ENCODE measurements at regions of chr5 and their contacts with region 1.

Region 1: GRCh38 chr5:892394-893136 is at the starts of genes BRD9 and TRIP13:
- DNase-seq: peak; percentile 75
- H3K4me3 ChIP-seq: peak within 1 kb of the TSS; percentile 58 to 79 (median 75)
- H3K27ac ChIP-seq: peak within 1 kb of the TSS; percentile 87
- H3K4me1 ChIP-seq: peaks cover 23% of the 10 kb centered on the region
- H3K27me3 ChIP-seq: no peaks in the 10 kb centered on the region
- CTCF ChIP-seq: no peak
- total RNA-seq, gene BRD9: 25.5 to 45.8 TPM
- total RNA-seq, gene TRIP13: 5.7 to 27.9 TPM

Region 2: DNA sequence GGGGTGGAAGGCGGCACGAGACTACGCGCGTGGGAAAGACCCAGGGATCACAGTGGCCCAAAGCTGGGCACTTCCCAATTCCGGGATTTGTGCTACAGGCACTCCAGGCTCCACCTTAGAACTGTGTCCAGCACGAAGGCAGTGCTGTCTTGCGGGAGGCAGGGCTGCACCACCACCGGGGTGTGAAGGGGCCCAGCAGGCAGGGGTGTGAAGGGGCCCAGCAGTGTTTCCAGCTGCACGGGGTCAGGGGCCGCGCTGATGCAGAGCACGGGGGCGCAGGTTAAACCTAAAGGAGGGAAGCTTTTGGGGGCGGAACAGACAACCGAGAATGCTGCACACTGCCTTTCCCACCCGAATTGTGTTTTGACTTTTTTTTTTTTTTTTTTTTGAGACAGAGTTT is 622.2 kb before region 1 on chr5:
- CTCF ChIA-PET with region 1: no interaction called
- dilution Hi-C with region 1: no loop called
- in situ Hi-C with region 1: no loop called
- intact Hi-C with region 1: loop called (anchors 5 kb)
- DNase-seq: no peak
- H3K4me3 ChIP-seq: peak overlapping the region in 1 of 3 experiments; percentile 53
- H3K27ac ChIP-seq: peak overlapping the region; percentile 38
- H3K4me1 ChIP-seq: peaks cover 7% of the 10 kb centered on the region
- H3K27me3 ChIP-seq: no peaks in the 10 kb centered on the region
- CTCF ChIP-seq: no peak

Region 3: DNA sequence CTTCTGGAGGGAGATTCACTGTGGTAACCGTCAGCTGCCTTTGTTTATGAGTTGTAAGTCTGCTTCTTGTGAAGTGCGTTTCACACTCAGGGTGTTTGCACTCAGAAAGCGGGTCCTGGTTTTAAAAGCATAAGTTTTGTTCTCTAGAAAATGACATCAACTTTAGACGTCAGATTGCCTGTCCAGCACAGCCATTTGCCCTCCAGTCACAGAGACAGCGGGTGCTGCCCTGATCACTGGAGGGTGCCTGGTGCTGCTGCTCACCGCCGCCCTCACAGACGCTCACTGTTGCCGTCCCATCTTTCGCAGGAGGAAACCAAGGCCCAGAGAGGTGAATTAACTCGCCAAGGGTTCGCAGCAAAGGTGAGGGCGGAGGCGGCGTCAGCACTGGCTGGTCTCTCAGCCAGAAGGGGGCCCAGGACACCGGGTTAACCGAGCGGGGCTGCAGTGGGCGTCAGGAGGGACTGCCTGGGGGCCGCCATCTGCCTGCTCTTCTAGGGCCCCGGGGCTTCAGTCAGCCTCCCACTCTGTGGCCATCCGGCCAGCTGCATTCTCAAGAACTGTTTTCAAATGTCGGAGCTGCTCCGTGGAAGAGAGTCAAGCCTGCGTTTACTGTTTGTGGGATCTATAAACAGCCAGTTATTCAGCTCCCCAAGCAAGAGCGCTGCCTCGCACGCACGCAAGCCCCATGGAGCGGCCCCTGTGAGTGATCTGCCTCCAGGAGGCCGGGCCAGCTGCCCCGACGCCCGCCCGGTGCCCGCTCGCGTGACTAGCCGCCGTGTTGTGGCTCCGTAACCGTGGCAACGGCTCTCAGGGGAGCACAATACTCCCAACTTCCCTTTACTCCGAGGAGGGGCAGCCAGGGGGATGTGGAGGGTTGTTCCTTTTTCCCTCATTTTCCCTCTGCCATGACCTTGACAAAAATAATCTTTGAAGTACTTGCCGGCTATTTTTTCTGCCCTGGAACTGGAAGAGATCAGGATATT is 493.0 kb before region 1 on chr5:
- CTCF ChIA-PET with region 1: no interaction called
- dilution Hi-C with region 1: no loop called
- in situ Hi-C with region 1: no loop called
- intact Hi-C with region 1: no loop called
- DNase-seq: peak; percentile 59
- H3K4me3 ChIP-seq: no peak overlapping the region
- H3K27ac ChIP-seq: no peak overlapping the region
- H3K4me1 ChIP-seq: peaks cover 12% of the 10 kb centered on the region
- H3K27me3 ChIP-seq: no peaks in the 10 kb centered on the region
- CTCF ChIP-seq: no peak

Region 4: DNA sequence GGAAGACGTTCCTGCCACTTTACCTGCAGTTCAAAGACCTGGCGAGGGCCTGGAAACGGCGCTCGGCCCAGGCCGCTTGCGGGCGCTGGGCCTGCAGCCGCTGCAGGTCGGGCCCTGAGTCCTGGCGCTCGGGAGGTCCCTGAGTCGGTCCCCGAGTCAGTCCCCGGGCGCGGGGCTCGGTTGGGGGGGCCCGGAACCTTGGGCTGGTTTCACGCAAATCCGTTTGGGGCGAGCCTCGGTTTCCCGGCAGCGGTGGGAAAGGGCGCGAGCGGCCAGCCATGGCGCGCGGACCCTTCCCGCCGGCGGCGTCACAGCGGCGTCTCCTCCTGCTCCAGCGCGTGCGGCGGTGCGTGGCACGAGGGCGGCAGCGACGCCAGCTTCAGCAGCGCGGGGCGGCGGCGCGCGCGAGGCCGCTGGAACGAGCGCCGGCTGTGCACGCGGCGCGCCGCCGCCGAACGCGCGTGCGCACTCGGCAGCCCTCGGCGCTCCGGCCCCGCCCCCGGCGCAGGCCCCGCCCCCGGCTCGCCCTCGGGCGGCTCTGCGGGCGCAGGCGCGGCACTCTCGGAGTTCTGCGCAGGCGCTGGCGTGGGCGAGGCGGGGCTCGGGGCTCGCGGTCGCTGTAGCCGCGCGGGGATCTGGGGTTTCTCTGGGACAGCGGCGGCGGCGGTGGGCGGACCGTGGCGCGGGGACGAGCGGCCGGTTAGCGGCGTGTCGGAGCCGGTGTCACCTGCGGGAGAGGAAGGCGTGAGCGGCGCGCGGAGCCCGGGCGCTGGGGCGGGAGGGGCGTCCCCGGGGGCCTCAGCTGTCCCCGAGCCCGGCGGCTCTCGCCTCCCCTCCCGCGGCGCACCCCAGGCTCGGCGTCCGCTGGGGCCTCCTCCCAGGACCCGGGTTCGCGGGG is 419.7 kb before region 1 on chr5:
- CTCF ChIA-PET with region 1: no interaction called
- dilution Hi-C with region 1: no loop called
- in situ Hi-C with region 1: no loop called
- intact Hi-C with region 1: loop called (anchors 10 kb)
- DNase-seq: peak; percentile 66
- H3K4me3 ChIP-seq: peak overlapping the region; percentile 69 to 94 (median 73)
- H3K27ac ChIP-seq: peak overlapping the region; percentile 32
- H3K4me1 ChIP-seq: peaks cover 31% of the 10 kb centered on the region
- H3K27me3 ChIP-seq: no peaks in the 10 kb centered on the region
- CTCF ChIP-seq: no peak

Region 5: DNA sequence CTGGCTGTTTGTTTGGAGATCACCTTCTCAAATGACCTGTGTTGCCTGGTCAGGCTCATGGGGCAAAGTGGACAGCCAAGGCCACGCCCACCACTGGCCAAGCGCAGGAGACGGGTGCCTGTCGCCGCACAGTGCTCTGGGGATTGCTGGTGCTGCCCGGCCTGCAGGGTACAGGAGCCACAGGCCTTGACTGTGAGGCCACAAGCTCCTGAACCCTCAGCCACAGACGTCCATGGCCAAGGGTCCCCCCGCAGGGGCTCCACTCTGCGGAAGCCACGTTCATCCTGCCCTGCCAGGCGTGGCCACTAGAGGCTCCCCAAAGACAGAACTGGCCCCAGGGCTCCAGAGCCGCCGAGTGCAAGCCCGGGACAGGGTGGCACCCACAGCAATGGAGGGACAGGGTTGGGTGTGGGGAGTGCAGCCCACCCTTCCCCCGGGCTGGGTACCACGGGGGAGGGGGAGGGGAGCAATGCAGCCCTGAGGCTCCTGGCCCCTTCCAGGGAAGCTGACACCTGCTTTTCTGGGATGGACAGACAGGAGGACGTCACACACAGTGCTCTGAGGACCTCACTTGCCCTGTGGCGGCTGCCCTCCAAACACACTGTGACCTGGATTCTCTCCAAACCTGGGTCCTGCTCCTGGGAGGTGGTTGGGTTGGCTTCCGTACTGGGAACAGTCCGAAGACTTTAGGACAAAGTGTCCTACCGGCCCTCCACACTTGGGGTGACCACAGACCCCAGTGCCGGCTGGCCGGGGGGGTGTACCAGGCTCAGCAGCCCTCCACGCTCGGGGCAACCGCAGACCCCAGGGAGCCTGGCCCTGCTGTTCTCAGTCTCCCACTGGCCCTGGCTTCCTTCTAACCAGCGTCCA is 220.9 kb before region 1 on chr5:
- CTCF ChIA-PET with region 1: no interaction called
- dilution Hi-C with region 1: no loop called
- in situ Hi-C with region 1: loop called in 1 of 2 experiments (anchors 25 kb)
- intact Hi-C with region 1: loop called (anchors 2 kb)
- DNase-seq: peak; percentile 36
- H3K4me3 ChIP-seq: no peak overlapping the region
- H3K27ac ChIP-seq: peak overlapping the region; percentile 20
- H3K4me1 ChIP-seq: peaks cover 26% of the 10 kb centered on the region
- H3K27me3 ChIP-seq: peaks cover 4% of the 10 kb centered on the region
- CTCF ChIP-seq: peak; percentile 69 to 97

Measured in mammary epithelial cell (primary cell).